Activated CD4-positive, alpha-beta T cell treated with anti-CD3 and anti-CD28 coated beads for 36 hours (primary cell): ENCODE measurements at regions of chr1 and their contacts with region 1.

Region 1: GRCh38 chr1:62407405-62408009 is 29.3 kb upstream of the USP1 start:
- DNase-seq: no peak
- ATAC-seq: peak; percentile 49
- H3K4me3 Mint-ChIP-seq: no peak overlapping the region
- H3K27ac Mint-ChIP-seq: no peak overlapping the region
- H3K4me1 Mint-ChIP-seq: no peaks in the 10 kb centered on the region
- H3K27me3 Mint-ChIP-seq: no peaks in the 10 kb centered on the region

Region 2: GRCh38 chr1:62175568-62176179 is 231.8 kb before region 1 on chr1:
- CTCF ChIA-PET with region 1: interaction called, 63 read pairs
- POLR2A ChIA-PET with region 1: no interaction called
- intact Hi-C with region 1: loop called (anchors 1 kb)
- DNase-seq: peak; percentile 52
- ATAC-seq: peak; percentile 51
- H3K4me3 Mint-ChIP-seq: no peak overlapping the region
- H3K27ac Mint-ChIP-seq: no peak overlapping the region
- H3K4me1 Mint-ChIP-seq: no peaks in the 10 kb centered on the region
- H3K27me3 Mint-ChIP-seq: no peaks in the 10 kb centered on the region

Region 3: DNA sequence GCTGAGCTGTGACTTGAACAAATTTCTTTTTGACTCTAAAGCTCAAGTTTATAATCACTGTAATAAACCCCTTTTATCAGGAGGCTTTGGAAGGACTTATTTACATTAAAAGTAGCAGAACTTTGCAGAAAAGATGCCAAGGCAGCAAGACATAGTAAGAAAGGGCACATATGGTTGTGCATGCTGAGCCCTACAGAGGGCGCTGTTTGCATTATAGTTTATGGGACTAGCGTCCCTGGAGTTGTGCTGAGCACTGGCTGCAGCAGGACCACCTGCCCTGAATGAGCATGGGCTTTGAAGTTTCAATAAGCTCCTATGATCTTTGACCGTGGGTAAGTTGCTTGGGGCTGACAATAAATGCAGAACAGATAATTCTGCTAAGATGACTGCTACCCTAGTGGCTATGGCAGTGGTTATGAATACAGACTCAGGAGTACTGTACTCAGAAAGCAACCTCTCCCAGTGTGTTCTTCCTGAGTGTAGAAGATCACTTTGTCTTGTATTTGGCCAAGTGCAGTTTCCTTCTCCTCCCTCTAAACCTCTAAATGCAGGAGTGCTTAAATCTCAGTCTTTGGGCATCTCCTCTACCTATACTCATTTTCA is 16.0 kb before region 1 on chr1:
- CTCF ChIA-PET with region 1: interaction called, 64 read pairs
- POLR2A ChIA-PET with region 1: no interaction called
- intact Hi-C with region 1: no loop called
- DNase-seq: peak; percentile 63
- ATAC-seq: peak; percentile 71
- H3K4me3 Mint-ChIP-seq: no peak overlapping the region
- H3K27ac Mint-ChIP-seq: no peak overlapping the region
- H3K4me1 Mint-ChIP-seq: no peaks in the 10 kb centered on the region
- H3K27me3 Mint-ChIP-seq: peaks cover 4% of the 10 kb centered on the region